A673 (cell line): ENCODE measurements at regions of chr1 and their contacts with region 1.

Region 1: GRCh38 chr1:93345633-93346420 is at the start of gene DR1:
- DNase-seq: peak; percentile 96
- H3K4me3 ChIP-seq: peak within 1 kb of the TSS; percentile 84
- H3K27ac ChIP-seq: peak within 1 kb of the TSS; percentile 98
- H3K4me1 ChIP-seq: peaks cover 24% of the 10 kb centered on the region
- H3K27me3 ChIP-seq: no peaks in the 10 kb centered on the region
- CTCF ChIP-seq: no peak
- total RNA-seq, gene DR1: 71.3 and 77.2 TPM in 2 replicates

Region 2: DNA sequence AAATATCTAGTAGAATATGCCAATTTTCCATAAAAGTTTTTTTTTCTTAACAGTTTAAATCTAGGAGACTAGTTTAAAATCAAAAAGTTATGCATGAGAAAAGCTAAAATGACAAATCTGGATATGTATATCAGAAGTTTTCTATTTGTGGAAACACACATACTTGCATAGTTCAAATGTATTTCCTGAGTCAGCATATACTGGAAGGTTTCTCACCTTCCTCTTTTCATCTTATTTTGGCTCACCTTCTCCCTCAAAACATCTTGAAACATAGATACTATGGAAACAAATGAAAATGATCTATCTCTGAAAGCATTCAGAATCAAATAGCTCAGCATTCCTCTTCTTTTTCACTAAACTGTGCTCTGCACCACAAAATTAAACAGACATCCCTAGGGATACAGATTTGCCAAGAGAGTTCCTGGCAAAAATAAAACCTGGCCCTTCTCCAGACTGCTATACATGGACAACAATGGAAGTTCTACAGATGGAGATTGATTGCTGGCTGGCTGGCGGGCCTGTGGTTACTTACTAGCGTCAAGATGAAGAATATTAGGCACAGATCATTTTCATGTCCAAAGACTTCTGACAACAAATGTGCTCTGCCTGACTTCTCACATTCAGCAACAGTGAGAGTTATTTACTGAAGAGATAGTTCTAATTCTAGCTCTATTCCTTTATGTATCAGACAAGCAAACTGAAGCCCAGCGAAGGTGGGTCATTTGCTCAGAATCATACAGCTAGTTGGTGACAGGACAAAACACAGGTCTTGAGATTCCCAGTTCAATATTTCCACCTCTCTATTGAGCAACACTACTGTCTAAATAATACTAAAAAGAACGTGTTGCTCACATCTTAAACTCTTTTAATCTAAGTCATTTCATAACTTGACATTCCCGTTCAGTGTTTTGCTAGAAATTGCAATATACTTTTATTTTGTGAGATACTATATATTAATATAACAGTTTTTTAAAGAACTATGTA is 411.1 kb before region 1 on chr1:
- CTCF ChIA-PET with region 1: no interaction called
- POLR2A ChIA-PET with region 1: no interaction called
- intact Hi-C with region 1: no loop called
- DNase-seq: peak; percentile 87
- H3K4me3 ChIP-seq: peak overlapping the region; percentile 7
- H3K27ac ChIP-seq: peak overlapping the region; percentile 6
- H3K4me1 ChIP-seq: peaks cover 39% of the 10 kb centered on the region
- H3K27me3 ChIP-seq: no peaks in the 10 kb centered on the region
- CTCF ChIP-seq: no peak

Region 3: DNA sequence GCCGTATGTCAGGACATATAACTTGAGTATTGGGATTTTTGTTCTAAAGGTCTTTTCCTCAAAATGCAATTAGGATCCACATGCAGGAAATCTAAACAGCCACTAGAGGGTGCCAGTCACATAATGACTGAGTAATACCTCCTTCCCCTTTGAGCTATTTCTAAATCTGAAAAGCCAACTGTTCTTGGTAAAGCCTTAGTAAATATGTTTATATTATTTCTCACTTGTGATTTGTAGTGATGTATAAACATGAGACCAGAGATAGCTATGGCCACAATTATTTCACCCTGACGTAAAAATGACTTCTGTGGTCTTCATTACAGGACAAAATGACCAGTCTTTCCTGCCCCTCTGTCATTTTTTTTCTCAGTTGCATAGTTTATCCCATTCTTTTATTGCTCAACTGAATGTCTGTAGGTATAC is 41.1 kb before region 1 on chr1:
- CTCF ChIA-PET with region 1: interaction called, 16 read pairs
- POLR2A ChIA-PET with region 1: no interaction called
- intact Hi-C with region 1: no loop called
- DNase-seq: peak; percentile 78
- H3K4me3 ChIP-seq: no peak overlapping the region
- H3K27ac ChIP-seq: no peak overlapping the region
- H3K4me1 ChIP-seq: no peaks in the 10 kb centered on the region
- H3K27me3 ChIP-seq: no peaks in the 10 kb centered on the region
- CTCF ChIP-seq: peak; percentile 94

Region 4: GRCh38 chr1:93331412-93331811 is 14.4 kb before region 1 on chr1:
- CTCF ChIA-PET with region 1: no interaction called
- POLR2A ChIA-PET with region 1: no interaction called
- intact Hi-C with region 1: no loop called
- DNase-seq: no peak
- H3K4me3 ChIP-seq: no peak overlapping the region
- H3K27ac ChIP-seq: no peak overlapping the region
- H3K4me1 ChIP-seq: peaks cover 3% of the 10 kb centered on the region
- H3K27me3 ChIP-seq: no peaks in the 10 kb centered on the region
- CTCF ChIP-seq: no peak

Region 5: DNA sequence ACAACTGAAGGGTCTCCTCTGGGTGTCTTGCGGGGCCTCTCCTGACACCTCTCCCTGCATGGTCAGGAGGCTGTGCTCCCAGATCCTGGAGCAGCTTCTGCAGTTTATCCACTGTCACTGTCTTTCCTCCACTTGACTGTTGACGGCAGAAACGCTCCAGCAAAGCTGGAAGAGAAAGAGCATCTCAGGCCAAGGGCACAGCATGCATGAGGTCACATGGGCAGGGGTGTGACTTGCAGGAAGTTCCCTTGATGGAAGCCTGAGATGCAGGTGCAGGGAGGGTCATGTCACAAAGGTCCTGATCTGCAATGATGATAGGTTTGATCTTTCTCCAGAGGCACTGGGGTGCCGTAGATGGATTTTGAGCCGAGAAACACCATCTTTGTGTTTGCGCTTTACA is 1497.6 kb after region 1 on chr1:
- CTCF ChIA-PET with region 1: no interaction called
- POLR2A ChIA-PET with region 1: interaction called, 14 read pairs
- intact Hi-C with region 1: no loop called
- DNase-seq: no peak
- H3K4me3 ChIP-seq: no peak overlapping the region
- H3K27ac ChIP-seq: no peak overlapping the region
- H3K4me1 ChIP-seq: no peaks in the 10 kb centered on the region
- H3K27me3 ChIP-seq: no peaks in the 10 kb centered on the region
- CTCF ChIP-seq: no peak